BJ (cell line): ENCODE measurements at regions of chr14 and their contacts with region 1.

Region 1: GRCh38 chr14:76337635-76338545 is 38.0 kb upstream of the ESRRB start:
- DNase-seq: no peak
- H3K4me3 ChIP-seq: peak overlapping the region; percentile 16; the same call in 1 of the 2 replicates
- H3K27me3 ChIP-seq: peaks cover 8% of the 10 kb centered on the region
- CTCF ChIP-seq: no peak

Region 2: GRCh38 chr14:76352639-76353281 is 14.9 kb after region 1 on chr14:
- CTCF ChIA-PET with region 1: interaction called, 12 read pairs
- POLR2A ChIA-PET with region 1: no interaction called
- DNase-seq: no peak
- H3K4me3 ChIP-seq: peak overlapping the region; percentile 23
- H3K27me3 ChIP-seq: peaks cover 9% of the 10 kb centered on the region
- CTCF ChIP-seq: peak; percentile 81

Region 3: DNA sequence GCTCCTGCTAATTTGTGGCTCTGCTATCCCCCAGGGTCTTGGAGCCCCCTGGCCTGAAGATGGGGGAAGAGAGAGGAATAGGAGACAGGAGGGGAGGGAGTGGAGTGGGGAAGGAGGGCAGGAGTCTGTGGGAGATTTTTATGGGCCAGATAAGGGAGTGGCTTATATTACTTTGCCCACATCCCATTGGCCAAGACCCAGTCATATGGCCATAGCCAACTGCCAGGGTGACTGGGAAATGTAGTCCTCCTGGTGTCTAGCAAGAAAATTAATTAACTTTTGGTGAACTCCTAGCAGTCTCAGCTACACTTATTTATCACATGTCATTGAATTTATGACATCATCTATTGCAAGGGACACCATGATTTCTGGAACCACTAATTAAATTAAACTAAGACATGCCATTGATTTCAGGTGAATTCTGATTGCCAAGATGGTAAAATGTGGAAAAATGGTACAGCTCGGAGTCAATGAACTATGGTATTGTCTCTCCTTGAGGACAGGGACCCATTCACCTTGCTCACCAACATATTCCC is 88.3 kb after region 1 on chr14:
- CTCF ChIA-PET with region 1: no interaction called
- POLR2A ChIA-PET with region 1: no interaction called
- DNase-seq: no peak
- H3K4me3 ChIP-seq: no peak overlapping the region
- H3K27me3 ChIP-seq: peaks cover 2% of the 10 kb centered on the region; the same call in 1 of the 2 replicates
- CTCF ChIP-seq: no peak